ENCODE measurements at regions of chr2 and their contacts with region 1.

Region 1: GRCh38 chr2:100562732-100563720 is at the start of gene PDCL3:
- DNase-seq: peak; percentile 98
- ATAC-seq: peak; percentile 93
- H3K4me3 ChIP-seq: peak within 1 kb of the TSS; percentile 92
- H3K27ac ChIP-seq: peak within 1 kb of the TSS; percentile 70
- H3K4me1 ChIP-seq: peaks cover 16% of the 10 kb centered on the region
- H3K27me3 ChIP-seq: no peaks in the 10 kb centered on the region
- CTCF ChIP-seq: no peak
- total RNA-seq, gene PDCL3: 20.7 and 27.2 TPM in 2 replicates

Region 2: DNA sequence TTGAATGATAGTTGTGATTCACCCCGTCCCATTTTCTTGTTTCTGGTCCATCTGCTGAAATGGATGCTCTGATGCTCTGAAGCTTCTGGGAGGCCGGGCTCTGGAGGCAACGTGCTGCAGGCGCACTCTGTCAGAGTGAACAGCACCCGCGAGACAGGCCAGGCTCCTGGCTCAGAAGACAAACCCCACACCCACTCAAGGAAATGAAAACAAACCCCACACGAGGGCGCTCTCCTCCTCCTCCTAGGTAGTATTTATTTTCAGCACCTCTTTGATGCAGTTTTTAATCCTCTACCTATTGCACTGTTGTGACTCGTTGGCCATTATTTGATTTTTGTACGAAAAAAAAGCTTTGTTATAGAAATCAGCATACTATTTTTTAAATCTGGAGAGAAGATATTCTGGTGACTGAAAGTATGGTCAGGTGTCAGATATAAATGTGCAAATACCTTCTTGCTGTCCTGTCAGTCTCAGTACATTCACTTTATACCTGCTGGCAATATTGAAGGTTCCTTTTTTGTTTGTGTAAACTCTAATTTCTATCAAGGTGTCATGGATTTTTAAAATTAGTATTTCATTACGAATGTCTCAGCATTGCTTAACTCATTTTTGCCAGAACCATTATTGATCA is 135.3 kb before region 1 on chr2:
- CTCF ChIA-PET with region 1: interaction called, 4 read pairs
- POLR2A ChIA-PET with region 1: interaction called, 14 read pairs
- intact Hi-C with region 1: loop called (anchors 2 kb)
- DNase-seq: peak; percentile 68
- ATAC-seq: peak; percentile 88
- H3K4me3 ChIP-seq: no peak overlapping the region
- H3K27ac ChIP-seq: no peak overlapping the region
- H3K4me1 ChIP-seq: no peaks in the 10 kb centered on the region
- H3K27me3 ChIP-seq: no peaks in the 10 kb centered on the region
- CTCF ChIP-seq: peak; percentile 70

Region 3: GRCh38 chr2:100513650-100514049 is 49.4 kb before region 1 on chr2:
- CTCF ChIA-PET with region 1: no interaction called
- POLR2A ChIA-PET with region 1: no interaction called
- intact Hi-C with region 1: no loop called
- DNase-seq: no peak
- ATAC-seq: no peak
- H3K4me3 ChIP-seq: no peak overlapping the region
- H3K27ac ChIP-seq: no peak overlapping the region
- H3K4me1 ChIP-seq: no peaks in the 10 kb centered on the region
- H3K27me3 ChIP-seq: peaks cover 17% of the 10 kb centered on the region
- CTCF ChIP-seq: no peak

Measured in PC-3 (cell line).